ENCODE measurements at regions of chr11 and their contacts with region 1.

Region 1: DNA sequence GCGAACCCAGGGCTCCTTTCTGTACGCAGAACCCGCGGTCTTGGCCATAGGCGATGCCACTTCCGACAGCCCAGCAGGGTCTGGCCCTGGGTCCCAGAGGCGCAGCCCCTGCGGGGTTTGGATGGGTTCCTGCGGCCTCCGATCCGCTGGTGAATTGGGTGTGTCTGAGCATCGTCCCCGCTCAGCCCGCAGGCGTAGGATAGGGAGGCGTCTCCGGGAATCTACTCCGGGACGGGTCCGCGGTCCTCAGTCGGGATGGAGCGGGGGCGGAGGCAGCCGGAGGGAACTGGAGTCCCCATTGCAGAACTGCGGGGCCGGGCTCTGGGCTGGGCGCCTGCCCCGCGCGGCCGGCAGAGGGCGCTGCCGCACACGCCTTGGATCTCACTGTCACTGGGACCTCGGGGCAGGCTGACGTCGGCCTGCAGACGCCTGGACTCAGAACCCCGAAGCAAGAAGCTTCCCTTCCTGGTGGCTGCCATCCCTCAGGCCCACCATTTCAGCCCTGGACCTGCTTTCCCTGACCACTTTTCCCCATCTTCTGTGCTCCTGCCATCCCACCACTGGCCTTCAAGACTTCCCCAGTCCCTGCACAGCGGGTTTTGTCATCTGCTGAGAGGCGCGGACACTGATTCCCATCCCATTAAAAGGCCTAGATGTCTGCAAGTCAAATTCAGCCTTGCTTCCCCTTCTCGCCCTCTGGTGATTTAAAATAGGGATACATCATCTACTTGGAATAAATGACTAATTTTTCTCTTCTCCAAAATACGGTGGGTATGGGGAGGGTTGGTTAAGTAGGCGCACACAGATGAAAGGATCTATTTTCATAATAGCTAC is 38.3 kb upstream of the CREB3L1 start:
- DNase-seq: peak; percentile 83
- H3K4me3 Mint-ChIP-seq: peak overlapping the region; percentile 58
- H3K27ac Mint-ChIP-seq: no peak overlapping the region
- H3K4me1 Mint-ChIP-seq: peaks cover 49% of the 10 kb centered on the region
- H3K27me3 Mint-ChIP-seq: peaks cover 42% of the 10 kb centered on the region

Region 2: GRCh38 chr11:46127150-46127638 is 112.0 kb before region 1 on chr11:
- CTCF ChIA-PET with region 1: interaction called, 11 read pairs
- DNase-seq: peak; percentile 80
- H3K4me3 Mint-ChIP-seq: no peak overlapping the region
- H3K27ac Mint-ChIP-seq: peak overlapping the region; percentile 12
- H3K4me1 Mint-ChIP-seq: peaks cover 28% of the 10 kb centered on the region
- H3K27me3 Mint-ChIP-seq: peaks cover 6% of the 10 kb centered on the region

Region 3: DNA sequence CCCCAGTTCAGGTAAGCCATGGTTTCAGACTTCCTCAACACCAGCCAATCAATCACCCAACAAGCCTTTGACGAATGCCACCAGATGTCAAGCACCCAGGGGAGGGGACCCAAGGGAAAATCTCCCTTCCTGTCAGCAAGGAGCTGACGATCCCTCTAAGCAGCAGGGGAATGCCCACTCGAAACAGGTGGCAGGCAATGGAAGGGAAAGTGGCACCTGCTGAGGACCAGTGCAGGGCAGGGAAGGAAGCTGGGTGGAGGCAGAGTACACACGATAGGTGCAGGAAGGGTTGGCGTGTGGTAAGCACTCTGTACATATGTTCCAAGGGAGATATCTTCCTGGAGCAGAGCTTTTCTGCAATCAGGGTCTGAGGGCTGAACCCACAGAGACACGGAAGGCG is 26.6 kb after region 1 on chr11:
- CTCF ChIA-PET with region 1: no interaction called
- DNase-seq: no peak
- H3K4me3 Mint-ChIP-seq: no peak overlapping the region
- H3K27ac Mint-ChIP-seq: no peak overlapping the region
- H3K4me1 Mint-ChIP-seq: no peaks in the 10 kb centered on the region
- H3K27me3 Mint-ChIP-seq: peaks cover 38% of the 10 kb centered on the region

Region 4: DNA sequence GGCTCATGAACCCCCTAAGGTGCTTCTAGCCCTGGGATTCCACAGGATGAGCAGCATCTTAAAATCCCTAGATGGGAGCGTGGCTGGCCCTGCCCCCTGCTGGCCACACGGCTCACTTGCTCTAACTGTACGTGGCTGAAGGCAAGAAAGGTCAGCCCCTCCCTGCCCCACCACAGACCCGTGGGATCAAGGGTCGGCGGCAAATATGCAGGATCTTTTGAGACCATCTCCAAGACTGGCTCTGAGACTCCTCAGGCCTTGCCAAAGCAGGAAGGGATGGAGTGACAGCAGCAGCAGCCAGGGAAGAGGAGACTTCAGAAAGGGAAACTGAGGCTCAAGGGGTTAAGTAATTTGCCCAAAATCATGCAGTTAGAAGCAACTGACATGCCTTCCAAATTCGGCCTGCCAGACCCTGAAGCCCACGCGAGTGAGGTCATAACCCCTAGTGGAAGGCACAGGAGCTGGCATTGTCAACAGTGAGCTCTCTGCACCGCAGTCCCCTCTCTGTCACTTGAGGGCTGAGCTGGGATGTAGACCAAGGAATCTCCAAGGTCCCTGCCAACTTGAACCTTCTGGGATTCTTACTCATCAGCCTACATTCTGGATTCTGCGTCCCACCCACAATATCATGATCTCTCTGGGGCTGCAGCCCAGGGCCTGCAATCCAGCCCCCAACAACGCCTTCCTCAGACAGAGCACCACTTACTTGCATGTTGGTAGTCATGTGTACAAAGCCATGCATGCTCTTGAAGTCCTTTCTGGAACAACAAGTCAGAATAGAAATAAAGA is 69.6 kb after region 1 on chr11:
- CTCF ChIA-PET with region 1: interaction called, 294 read pairs
- DNase-seq: peak; percentile 78
- H3K4me3 Mint-ChIP-seq: no peak overlapping the region
- H3K27ac Mint-ChIP-seq: no peak overlapping the region
- H3K4me1 Mint-ChIP-seq: peaks cover 20% of the 10 kb centered on the region
- H3K27me3 Mint-ChIP-seq: peaks cover 24% of the 10 kb centered on the region